Activated CD8-positive, alpha-beta T cell treated with anti-CD3 and anti-CD28 coated beads for 36 hours (primary cell): ENCODE measurements at regions of chr17 and their contacts with region 1.

Region 1: GRCh38 chr17:4565209-4566141 is 5.1 kb upstream of the GGT6 start:
- DNase-seq: peak; percentile 77
- ATAC-seq: peak; percentile 64
- H3K4me3 Mint-ChIP-seq: no peak overlapping the region
- H3K27ac Mint-ChIP-seq: no peak overlapping the region
- H3K4me1 Mint-ChIP-seq: peaks cover 34% of the 10 kb centered on the region
- H3K27me3 Mint-ChIP-seq: no peaks in the 10 kb centered on the region
- CTCF ChIP-seq: peak; percentile 79

Region 2: GRCh38 chr17:4488989-4489595 is 76.4 kb before region 1 on chr17:
- CTCF ChIA-PET with region 1: no interaction called
- POLR2A ChIA-PET with region 1: no interaction called
- intact Hi-C with region 1: no loop called
- DNase-seq: no peak
- ATAC-seq: no peak
- H3K4me3 Mint-ChIP-seq: no peak overlapping the region
- H3K27ac Mint-ChIP-seq: no peak overlapping the region
- H3K4me1 Mint-ChIP-seq: peaks cover 30% of the 10 kb centered on the region
- H3K27me3 Mint-ChIP-seq: no peaks in the 10 kb centered on the region
- CTCF ChIP-seq: no peak

Region 3: DNA sequence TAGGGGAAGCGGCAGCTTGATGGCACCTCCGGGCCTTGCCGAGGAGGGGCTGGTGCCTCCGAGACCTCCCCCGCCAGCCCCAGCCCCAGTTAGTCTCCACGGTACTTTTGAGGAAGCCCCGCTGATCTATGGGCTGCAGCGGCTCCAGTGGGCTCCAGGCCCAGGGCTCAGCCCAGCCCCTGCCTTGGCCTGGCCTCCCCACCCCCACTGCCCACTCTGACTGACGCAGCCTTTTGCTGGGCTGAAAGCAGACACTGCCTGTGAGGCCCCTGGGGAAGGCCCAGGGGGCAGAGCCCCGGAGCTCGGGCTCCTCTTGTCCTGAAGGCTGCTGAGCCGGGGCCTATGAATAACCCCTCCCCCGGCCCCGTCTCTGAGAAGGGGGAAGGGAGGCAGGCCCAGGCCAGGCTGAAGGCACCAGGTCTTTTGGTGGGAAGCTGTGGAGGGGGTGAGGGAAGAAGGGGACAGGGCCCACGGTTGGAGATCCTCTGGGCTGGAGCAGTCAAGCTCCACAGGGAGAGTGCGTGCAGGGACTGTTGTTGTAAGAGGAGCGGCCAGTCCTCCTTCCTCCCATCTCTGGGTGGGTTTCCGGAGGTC is 11.4 kb after region 1 on chr17:
- CTCF ChIA-PET with region 1: interaction called, 15 read pairs
- POLR2A ChIA-PET with region 1: interaction called, 3 read pairs
- intact Hi-C with region 1: no loop called
- DNase-seq: no peak
- ATAC-seq: no peak
- H3K4me3 Mint-ChIP-seq: no peak overlapping the region
- H3K27ac Mint-ChIP-seq: no peak overlapping the region
- H3K4me1 Mint-ChIP-seq: peaks cover 15% of the 10 kb centered on the region
- H3K27me3 Mint-ChIP-seq: peaks cover 3% of the 10 kb centered on the region
- CTCF ChIP-seq: no peak

Region 4: DNA sequence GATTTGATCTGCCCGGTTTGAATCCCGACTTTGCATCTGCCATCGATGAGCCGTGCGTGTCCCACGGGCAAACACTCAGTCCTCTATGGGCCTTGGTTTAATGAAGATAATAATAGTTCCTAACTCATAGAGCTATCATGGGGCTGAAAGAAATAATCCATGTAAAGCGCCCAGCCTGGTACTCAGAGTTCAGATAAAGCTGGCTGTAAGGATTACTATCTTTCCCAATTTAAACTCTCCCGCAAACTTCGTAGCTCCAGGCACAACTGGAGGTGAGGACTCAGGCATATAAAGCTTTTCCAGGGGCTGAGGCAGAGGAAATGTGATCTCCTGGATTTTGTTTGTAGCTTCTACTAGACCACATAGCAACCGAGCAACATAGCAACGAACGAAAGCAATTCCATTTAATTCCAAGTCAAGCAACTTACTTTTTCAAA is 59.7 kb after region 1 on chr17:
- CTCF ChIA-PET with region 1: interaction called, 101 read pairs
- POLR2A ChIA-PET with region 1: interaction called, 3 read pairs
- intact Hi-C with region 1: loop called (anchors 2 kb)
- DNase-seq: no peak
- ATAC-seq: no peak
- H3K4me3 Mint-ChIP-seq: no peak overlapping the region
- H3K27ac Mint-ChIP-seq: no peak overlapping the region
- H3K4me1 Mint-ChIP-seq: no peaks in the 10 kb centered on the region
- H3K27me3 Mint-ChIP-seq: peaks cover 6% of the 10 kb centered on the region
- CTCF ChIP-seq: no peak

Region 5: DNA sequence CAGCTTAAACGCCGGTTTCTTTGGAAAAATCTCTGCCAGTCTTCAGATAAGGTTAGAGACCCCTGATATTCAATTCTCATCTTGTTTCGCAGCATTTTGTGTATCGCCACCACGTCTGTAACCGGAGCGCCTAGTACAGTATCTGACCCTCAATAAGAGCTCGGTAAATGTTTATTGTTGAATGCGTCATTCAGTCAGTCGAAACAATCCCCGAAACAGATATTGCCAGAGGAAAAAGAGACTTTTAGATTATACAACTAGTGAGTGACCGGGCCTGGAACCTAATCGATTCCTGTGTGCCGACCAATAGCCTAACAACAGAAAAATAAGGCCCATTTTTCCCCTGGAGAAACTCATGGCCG is 137.8 kb after region 1 on chr17:
- CTCF ChIA-PET with region 1: interaction called, 13 read pairs
- POLR2A ChIA-PET with region 1: no interaction called
- intact Hi-C with region 1: loop called (anchors 10 kb)
- DNase-seq: no peak
- ATAC-seq: no peak
- H3K4me3 Mint-ChIP-seq: peak overlapping the region; percentile 79
- H3K27ac Mint-ChIP-seq: peak overlapping the region; percentile 98
- H3K4me1 Mint-ChIP-seq: peaks cover 42% of the 10 kb centered on the region
- H3K27me3 Mint-ChIP-seq: no peaks in the 10 kb centered on the region
- CTCF ChIP-seq: no peak

Region 6: GRCh38 chr17:4887581-4887980 is 322.1 kb after region 1 on chr17:
- CTCF ChIA-PET with region 1: interaction called, 11 read pairs
- POLR2A ChIA-PET with region 1: no interaction called
- intact Hi-C with region 1: no loop called
- DNase-seq: no peak
- ATAC-seq: no peak
- H3K4me3 Mint-ChIP-seq: no peak overlapping the region
- H3K27ac Mint-ChIP-seq: no peak overlapping the region
- H3K4me1 Mint-ChIP-seq: no peaks in the 10 kb centered on the region
- H3K27me3 Mint-ChIP-seq: no peaks in the 10 kb centered on the region
- CTCF ChIP-seq: no peak